Activated CD8-positive, alpha-beta T cell treated with anti-CD3 and anti-CD28 coated beads for 36 hours (primary cell): ENCODE measurements at regions of chr1 and their contacts with region 1.

Region 1: GRCh38 chr1:226407497-226408284 is at the start of gene PARP1:
- DNase-seq: peak; percentile 94
- ATAC-seq: peak; percentile 95
- H3K4me3 Mint-ChIP-seq: peak within 1 kb of the TSS; percentile 99
- H3K27ac Mint-ChIP-seq: peak within 1 kb of the TSS; percentile 98
- H3K4me1 Mint-ChIP-seq: peaks cover 34% of the 10 kb centered on the region
- H3K27me3 Mint-ChIP-seq: no peaks in the 10 kb centered on the region
- CTCF ChIP-seq: peak; percentile 76
- total RNA-seq, gene PARP1: 203 to 206 TPM

Region 2: DNA sequence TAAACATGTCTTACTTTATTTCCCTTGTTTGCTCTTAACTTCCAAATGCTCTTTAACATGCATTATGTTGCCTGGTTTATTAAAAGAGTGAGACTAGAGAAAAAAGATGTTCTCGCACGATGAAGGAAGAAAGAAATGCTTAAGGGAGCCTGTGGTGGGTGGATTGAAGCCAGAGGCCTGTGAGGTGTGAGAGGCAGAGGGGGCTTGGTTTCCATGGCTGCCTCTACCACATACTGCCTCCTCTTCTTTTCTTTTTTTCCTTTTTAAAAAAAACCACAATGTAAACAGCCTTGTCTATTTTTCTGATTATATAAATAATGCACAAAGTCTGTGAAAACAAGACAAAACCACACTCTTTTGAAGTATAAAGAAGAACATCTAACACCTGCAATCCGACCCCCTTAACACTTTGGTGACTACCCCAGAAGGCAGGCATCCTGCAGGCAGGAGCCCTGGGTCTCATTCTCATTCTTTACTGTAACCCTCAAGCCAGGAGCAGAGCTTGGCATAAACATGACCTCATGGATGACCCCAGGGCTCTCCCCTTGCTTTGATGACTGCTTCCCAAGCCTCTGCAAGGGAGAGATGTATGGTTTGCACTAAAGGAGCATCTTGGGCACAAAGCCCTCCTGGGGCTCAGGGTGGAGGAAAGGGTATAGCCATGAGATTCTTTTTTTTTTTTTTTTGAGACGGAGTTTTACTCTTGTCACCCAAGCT is 10.3 kb after region 1 on chr1:
- CTCF ChIA-PET with region 1: interaction called, 95 read pairs
- POLR2A ChIA-PET with region 1: interaction called, 17 read pairs
- intact Hi-C with region 1: no loop called
- DNase-seq: no peak
- ATAC-seq: no peak
- H3K4me3 Mint-ChIP-seq: no peak overlapping the region
- H3K27ac Mint-ChIP-seq: no peak overlapping the region
- H3K4me1 Mint-ChIP-seq: peaks cover 12% of the 10 kb centered on the region
- H3K27me3 Mint-ChIP-seq: no peaks in the 10 kb centered on the region
- CTCF ChIP-seq: no peak

Region 3: GRCh38 chr1:226438007-226438406 is 30.3 kb after region 1 on chr1:
- CTCF ChIA-PET with region 1: interaction called, 20 read pairs
- POLR2A ChIA-PET with region 1: interaction called, 4 read pairs
- intact Hi-C with region 1: no loop called
- DNase-seq: no peak
- ATAC-seq: no peak
- H3K4me3 Mint-ChIP-seq: no peak overlapping the region
- H3K27ac Mint-ChIP-seq: no peak overlapping the region
- H3K4me1 Mint-ChIP-seq: no peaks in the 10 kb centered on the region
- H3K27me3 Mint-ChIP-seq: no peaks in the 10 kb centered on the region
- CTCF ChIP-seq: no peak

Region 4: GRCh38 chr1:226457307-226457712 is 49.6 kb after region 1 on chr1:
- CTCF ChIA-PET with region 1: interaction called, 21 read pairs
- POLR2A ChIA-PET with region 1: interaction called, 3 read pairs
- intact Hi-C with region 1: no loop called
- DNase-seq: peak; percentile 80
- ATAC-seq: peak; percentile 92
- H3K4me3 Mint-ChIP-seq: peak overlapping the region; percentile 67
- H3K27ac Mint-ChIP-seq: peak overlapping the region; percentile 84
- H3K4me1 Mint-ChIP-seq: peaks cover 18% of the 10 kb centered on the region
- H3K27me3 Mint-ChIP-seq: no peaks in the 10 kb centered on the region
- CTCF ChIP-seq: peak; percentile 72